GM10248 (cell line): ENCODE measurements at regions of chr3 and their contacts with region 1.

Region 1: DNA sequence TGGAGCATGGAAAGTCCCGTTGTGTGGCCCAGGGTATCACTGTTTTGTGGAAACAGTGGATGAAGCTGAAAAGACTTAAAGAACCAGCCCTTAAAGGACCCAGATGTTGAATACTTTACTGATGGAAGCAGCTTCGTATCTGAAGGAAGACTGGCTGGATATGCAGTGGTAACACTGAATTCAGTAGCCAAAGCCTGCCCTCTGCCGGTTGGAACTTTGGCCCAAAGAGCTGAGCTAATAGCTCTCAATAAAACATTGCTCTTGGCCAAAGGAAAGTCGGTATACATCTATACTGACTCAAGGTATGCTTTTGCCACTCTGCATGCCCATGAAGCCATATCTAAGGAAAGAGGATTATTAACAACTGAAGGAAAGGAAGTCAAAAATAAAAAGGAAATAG is 885.4 kb downstream of the PDCD6IP start:
- DNase-seq: no peak
- CTCF ChIP-seq: peak; percentile 63

Region 2: DNA sequence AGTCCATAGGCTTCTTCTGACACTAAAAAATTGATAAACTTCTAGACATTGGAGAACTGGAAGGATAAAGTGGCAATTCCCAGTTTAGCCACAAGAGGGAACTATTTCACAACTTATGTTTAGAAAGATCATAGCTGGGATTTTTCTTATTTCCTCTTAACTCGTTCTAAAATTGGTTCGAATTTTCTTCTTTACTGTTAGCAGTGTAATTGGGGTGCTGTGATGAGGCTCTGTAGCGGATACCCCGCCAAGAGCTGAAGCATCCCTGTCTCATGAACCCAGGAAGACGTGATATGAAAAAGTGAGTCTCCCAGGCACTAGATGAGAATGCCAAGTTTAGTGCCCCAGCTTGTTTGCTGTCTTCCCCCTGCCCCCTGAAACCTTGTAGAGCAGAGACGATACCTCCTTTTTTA is 800.3 kb before region 1 on chr3:
- CTCF ChIA-PET with region 1: interaction called, 88 read pairs
- POLR2A ChIA-PET with region 1: no interaction called
- DNase-seq: peak; percentile 45
- CTCF ChIP-seq: peak; percentile 73

Region 3: DNA sequence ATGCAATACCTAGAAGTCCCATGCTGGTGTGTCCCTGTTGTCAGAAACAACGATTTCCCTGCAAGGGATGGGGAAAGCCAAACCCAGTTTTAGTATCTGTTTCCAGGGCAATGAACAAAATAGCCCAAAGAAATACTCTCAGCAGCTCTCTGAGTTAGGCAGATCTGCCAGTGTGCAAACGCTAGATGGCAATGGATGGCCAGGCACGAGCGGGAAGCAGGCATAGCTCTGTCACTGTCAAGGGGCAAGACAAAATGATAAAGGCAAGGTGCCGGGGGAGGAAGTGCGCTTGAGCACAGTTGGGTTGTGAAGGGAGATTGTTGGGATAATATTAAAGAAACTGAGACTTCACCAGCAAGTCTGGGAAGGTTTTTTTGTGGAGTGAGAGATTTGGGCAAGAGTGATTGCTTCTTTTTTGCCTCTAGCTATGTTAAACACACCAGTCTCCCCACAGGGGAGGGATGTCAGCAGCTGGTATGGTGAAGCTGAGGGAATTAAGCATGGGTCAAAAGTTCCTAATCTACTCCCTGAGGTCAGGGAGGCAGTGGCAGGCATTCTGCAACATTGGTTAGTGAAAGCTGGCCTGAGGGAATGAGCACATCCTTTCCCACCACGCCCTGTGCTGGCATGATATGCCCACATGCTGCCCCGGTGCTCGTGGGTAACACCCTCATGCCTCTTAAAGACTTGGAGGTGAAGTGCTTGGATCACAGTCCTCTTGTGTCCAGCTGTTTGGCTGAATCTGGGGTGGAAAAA is 767.9 kb before region 1 on chr3:
- CTCF ChIA-PET with region 1: interaction called, 20 read pairs
- POLR2A ChIA-PET with region 1: no interaction called
- DNase-seq: peak; percentile 28
- CTCF ChIP-seq: peak; percentile 35

Region 4: GRCh38 chr3:33980252-33980651 is 703.6 kb before region 1 on chr3:
- CTCF ChIA-PET with region 1: interaction called, 17 read pairs
- POLR2A ChIA-PET with region 1: no interaction called
- DNase-seq: no peak
- CTCF ChIP-seq: peak; percentile 60

Region 5: GRCh38 chr3:34106879-34107278 is 577.0 kb before region 1 on chr3:
- CTCF ChIA-PET with region 1: interaction called, 11 read pairs
- POLR2A ChIA-PET with region 1: no interaction called
- DNase-seq: peak; percentile 20
- CTCF ChIP-seq: peak; percentile 61

Region 6: DNA sequence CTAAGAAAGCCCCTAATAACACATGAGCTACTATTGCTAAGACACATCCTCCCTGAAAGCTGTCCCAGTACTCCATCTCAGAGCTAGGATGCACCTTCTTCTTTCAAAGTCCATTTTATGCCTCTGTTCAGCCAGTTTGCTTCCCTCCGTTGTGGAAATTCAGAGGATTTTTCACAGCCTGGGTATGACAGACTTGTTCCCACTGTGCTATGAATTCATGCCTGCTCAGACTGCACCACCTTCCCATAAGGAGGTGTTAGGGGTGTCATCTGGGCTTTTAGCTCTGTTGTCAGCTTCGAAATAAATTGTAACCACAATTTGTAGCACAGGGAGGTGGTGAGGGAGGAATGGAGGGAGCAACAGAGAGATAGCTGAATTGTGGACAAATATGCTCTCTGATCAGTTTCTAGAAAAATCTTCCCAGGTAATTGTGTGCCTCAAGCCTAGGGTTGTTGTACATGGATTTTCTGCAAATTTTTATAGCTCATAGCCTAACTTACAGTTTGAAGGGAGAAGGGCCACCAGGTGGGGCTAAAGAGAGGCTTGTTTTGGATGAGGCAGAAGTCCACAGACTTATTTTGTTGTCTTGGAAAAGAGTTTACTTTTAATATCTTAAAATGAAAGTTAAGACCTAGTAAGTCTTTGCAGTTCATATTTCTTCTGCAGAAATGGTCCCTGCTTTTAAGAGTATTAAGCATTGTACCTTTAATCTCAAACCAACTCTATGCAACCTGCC is 423.4 kb before region 1 on chr3:
- CTCF ChIA-PET with region 1: interaction called, 43 read pairs
- POLR2A ChIA-PET with region 1: no interaction called
- DNase-seq: peak; percentile 54
- CTCF ChIP-seq: peak; percentile 72

Region 7: GRCh38 chr3:34511891-34512290 is 172.0 kb before region 1 on chr3:
- CTCF ChIA-PET with region 1: no interaction called
- POLR2A ChIA-PET with region 1: no interaction called
- DNase-seq: no peak
- CTCF ChIP-seq: no peak

Region 8: DNA sequence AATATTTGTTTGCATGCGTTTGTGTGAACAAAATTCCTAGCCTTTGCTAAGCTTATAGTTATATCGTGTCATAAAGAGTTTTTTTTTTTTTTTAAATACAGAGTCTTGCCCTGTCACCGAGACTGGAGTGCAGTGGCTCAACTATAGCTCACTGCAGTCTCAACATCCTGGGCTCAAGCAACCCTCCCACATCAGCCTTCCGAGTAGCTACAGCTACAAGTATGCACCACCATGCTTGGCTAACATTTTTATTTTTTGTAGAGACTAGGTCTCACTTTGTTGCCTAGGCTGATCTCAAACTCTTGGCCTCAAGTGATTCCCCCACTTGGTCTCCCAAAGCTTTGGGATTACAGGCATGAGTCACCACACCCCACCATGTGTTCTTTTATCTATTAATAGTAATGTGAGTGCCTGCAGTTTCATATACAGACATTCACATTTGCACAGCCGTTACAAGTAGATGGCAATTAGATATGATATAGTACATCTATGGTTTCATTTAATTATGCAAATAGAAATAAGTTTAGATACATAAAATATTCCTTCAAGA is 36.9 kb before region 1 on chr3:
- CTCF ChIA-PET with region 1: no interaction called
- POLR2A ChIA-PET with region 1: no interaction called
- DNase-seq: no peak
- CTCF ChIP-seq: no peak

Region 9: DNA sequence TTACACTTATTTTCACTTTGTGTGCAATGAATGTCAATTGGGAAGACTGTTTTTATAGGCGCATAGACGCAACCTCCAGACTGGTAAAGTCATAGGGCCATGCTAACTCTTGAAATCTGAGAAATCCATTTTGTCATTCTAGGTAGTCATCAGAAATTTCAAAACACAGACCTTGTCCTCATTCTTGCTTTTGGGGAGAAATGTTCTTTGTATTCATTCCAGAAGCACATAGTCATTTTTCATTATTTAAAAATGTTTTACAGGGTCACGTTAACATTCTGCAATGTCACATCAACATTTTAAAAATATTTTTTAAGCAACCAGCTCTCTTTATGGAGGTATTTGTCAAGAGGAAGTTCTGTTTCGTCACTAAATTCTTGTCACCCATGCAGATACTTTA is 13.0 kb after region 1 on chr3:
- CTCF ChIA-PET with region 1: interaction called, 30 read pairs
- POLR2A ChIA-PET with region 1: no interaction called
- DNase-seq: no peak
- CTCF ChIP-seq: no peak